Thyroid gland (tissue), 4 donors: ENCODE measurements at regions of chr2 and their contacts with region 1.

Region 1: DNA sequence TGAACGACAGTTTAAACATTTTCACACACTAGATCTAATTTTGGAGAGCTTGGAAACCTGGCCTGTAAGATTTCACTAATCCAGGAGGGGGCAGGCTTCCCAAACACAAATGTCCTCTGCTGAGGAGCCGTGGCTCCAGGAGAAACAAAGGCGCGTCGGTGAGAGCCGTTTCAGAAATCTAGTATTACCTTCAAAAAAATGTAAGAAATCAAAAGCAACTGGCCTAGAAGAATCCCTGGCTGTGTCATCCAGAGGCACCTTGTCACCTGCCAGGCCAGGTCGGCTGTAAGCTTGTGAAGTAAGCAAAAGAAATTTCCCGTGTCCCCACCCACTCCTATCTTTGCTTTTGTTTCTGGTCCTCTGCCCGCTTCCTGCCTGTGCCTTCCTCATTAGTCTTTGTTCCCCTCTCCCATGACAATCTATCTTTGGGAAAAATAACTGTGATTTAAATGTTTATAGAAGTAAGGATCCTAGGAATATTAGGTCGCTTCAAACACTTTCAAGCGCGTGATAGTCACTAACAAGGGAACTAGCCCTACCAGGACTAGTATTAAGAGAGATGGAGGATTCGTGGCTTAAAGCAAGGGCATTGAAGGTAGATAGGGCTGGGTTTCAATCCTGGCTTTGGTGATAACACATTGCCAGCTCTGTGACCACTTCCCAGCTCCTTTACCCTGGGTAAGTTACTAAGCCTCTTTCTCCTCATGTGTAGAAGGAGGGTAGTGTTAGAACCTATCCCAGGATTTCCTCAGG is 99.5 kb upstream of the STK39 start:
- DNase-seq: peak; percentile 69 to 73
- H3K4me3 ChIP-seq: peak overlapping the region in 2 of 3 donors; percentile 12 to 25
- H3K27ac ChIP-seq: peak overlapping the region in 1 of 3 donors; percentile 10
- H3K4me1 ChIP-seq: peaks cover 0 to 4% of the 10 kb centered on the region in 2 donors
- H3K27me3 ChIP-seq: no peaks in the 10 kb centered on the region
- CTCF ChIP-seq: peak; percentile 43 to 95 (median 77)
- POLR2A ChIP-seq: no peak

Region 2: DNA sequence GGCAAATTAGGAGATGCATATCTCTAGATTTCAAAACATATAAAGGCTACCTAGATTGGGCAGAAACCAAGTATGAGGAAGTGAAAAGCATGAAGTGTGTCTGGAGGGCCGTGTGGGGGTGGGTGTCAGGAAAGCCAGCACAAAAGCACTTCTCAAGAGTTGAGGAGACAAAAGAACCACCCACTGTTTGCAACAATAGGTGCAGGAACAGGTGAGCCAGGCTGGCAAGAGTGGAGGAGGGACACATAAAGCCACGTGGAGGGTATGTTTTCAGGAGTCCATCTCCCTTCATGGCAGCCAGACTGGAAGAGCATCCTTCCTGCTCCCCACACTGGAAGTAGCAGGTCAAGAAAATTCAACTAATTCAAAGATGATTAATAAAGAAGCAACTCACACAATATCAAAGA is 205.6 kb after region 1 on chr2:
- intact Hi-C with region 1: no loop called
- DNase-seq: peak in 1 of 2 donors; percentile 37
- H3K4me3 ChIP-seq: no peak overlapping the region
- H3K27ac ChIP-seq: no peak overlapping the region
- H3K4me1 ChIP-seq: peaks cover 0 to 6% of the 10 kb centered on the region in 2 donors
- H3K27me3 ChIP-seq: no peaks in the 10 kb centered on the region
- CTCF ChIP-seq: no peak
- POLR2A ChIP-seq: no peak

Region 3: GRCh38 chr2:168639053-168639898 is 292.4 kb after region 1 on chr2:
- intact Hi-C with region 1: no loop called
- DNase-seq: peak; percentile 26 to 60
- H3K4me3 ChIP-seq: no peak overlapping the region
- H3K27ac ChIP-seq: no peak overlapping the region
- H3K4me1 ChIP-seq: peaks cover 12% of the 10 kb centered on the region in 2 donors
- H3K27me3 ChIP-seq: no peaks in the 10 kb centered on the region
- CTCF ChIP-seq: no peak
- POLR2A ChIP-seq: no peak

Region 4: GRCh38 chr2:168705534-168706470 is 358.9 kb after region 1 on chr2:
- intact Hi-C with region 1: loop called (anchors 10 kb)
- DNase-seq: no peak
- H3K4me3 ChIP-seq: no peak overlapping the region
- H3K27ac ChIP-seq: no peak overlapping the region
- H3K4me1 ChIP-seq: peaks cover 0 to 7% of the 10 kb centered on the region in 2 donors
- H3K27me3 ChIP-seq: no peaks in the 10 kb centered on the region
- CTCF ChIP-seq: peak in 4 of 6 experiments; percentile 9 to 47 (median 34)
- POLR2A ChIP-seq: no peak

Region 5: DNA sequence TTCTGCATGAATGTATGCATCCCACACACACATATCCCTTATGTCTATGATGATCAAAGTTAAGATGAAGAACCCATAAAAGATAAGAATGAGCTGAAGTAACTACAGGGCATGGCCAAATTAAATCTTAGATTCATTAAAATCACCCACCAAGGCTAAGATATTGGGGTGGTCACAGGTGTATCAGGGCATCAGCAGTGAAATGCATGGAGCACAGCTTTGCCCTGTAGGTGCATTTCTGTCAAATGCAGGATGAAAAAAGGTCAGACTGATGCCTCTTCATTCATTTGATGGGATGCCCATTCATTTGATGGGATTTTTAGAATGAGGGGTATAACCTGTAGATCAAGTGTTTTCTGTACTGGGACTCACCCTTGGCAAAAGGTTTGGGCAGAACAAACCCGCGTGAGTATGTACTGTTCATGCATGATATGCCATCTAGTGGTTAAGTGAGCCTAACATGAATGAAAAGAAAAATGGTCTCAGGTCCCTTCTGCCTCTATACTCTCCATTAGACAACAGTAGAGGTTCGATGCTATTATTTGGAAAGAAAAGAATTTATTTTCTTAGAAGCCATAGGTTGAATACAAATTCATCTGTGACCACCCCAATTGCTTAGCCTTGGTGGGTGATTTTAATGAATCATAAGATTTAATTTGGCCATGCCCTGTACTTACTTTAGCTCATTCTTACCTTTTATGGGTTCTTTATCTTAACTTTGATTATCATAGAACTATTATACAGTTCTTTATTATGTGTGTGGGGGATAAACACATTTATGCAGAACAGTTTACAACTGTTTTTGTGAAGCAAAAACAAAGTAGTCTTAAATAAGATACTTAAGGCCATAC is 412.3 kb after region 1 on chr2:
- intact Hi-C with region 1: loop called (anchors 5 kb)
- DNase-seq: peak; percentile 45 to 49
- H3K4me3 ChIP-seq: no peak overlapping the region
- H3K27ac ChIP-seq: no peak overlapping the region
- H3K4me1 ChIP-seq: no peaks in the 10 kb centered on the region
- H3K27me3 ChIP-seq: no peaks in the 10 kb centered on the region
- CTCF ChIP-seq: peak in 5 of 6 experiments; percentile 38 to 76 (median 65)
- POLR2A ChIP-seq: no peak

Region 6: GRCh38 chr2:168920504-168921157 is 573.7 kb after region 1 on chr2:
- intact Hi-C with region 1: loop called (anchors 10 kb)
- DNase-seq: no peak
- H3K4me3 ChIP-seq: no peak overlapping the region
- H3K27ac ChIP-seq: no peak overlapping the region
- H3K4me1 ChIP-seq: no peaks in the 10 kb centered on the region
- H3K27me3 ChIP-seq: no peaks in the 10 kb centered on the region
- CTCF ChIP-seq: peak; percentile 22 to 75 (median 52)
- POLR2A ChIP-seq: no peak